GM10248 (cell line): ENCODE measurements at regions of chr11 and their contacts with region 1.

Region 1: GRCh38 chr11:46826310-46827044 is 19.6 kb downstream of the CKAP5 start:
- DNase-seq: peak; percentile 83
- CTCF ChIP-seq: no peak

Region 2: GRCh38 chr11:46570790-46571398 is 255.6 kb before region 1 on chr11:
- CTCF ChIA-PET with region 1: no interaction called
- POLR2A ChIA-PET with region 1: no interaction called
- DNase-seq: no peak
- CTCF ChIP-seq: no peak

Region 3: GRCh38 chr11:46808799-46809431 is 17.6 kb before region 1 on chr11:
- CTCF ChIA-PET with region 1: interaction called, 19 read pairs
- POLR2A ChIA-PET with region 1: no interaction called
- DNase-seq: no peak
- CTCF ChIP-seq: no peak

Region 4: DNA sequence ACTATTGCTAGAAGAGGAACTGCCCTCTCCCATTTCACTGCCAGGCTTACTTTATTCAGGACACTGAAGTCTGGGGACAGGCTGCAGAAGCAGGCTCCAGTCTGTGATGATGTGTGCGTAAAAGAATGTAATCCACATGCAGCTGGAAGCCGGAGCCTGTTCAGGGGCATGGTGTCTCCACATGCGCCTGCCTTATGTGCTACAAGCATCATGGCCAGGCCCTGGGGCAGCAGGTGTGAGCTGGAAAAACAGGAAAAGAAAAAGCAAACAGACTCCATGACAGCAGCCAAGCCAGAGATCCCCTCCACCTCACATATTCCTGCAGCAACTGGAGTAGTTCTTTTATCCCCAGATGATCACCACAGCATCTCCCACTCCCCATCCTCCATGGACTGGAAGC is 316.8 kb after region 1 on chr11:
- CTCF ChIA-PET with region 1: no interaction called
- POLR2A ChIA-PET with region 1: no interaction called
- DNase-seq: no peak
- CTCF ChIP-seq: no peak